ENCODE measurements at regions of chr14 and their contacts with region 1.

Region 1: DNA sequence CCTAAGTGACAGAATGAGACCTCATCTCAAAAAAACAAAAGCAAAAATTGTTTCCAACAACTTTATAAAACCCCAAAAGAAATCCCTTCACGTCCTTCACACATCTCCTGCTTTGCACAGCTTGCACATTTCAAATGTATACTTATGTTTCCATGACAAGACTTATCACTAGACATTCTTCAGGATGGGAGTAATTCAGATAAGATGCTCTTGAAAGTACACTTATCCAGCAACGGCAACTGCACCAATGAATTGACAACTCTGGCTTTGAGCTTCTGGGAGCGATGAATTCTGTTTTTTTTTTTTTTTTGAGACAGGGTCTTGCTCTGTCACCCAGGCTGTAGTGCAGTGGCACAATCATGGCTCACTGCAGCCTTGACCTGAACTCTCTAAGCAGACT is 30.8 kb upstream of the AKAP5 start:
- DNase-seq: no peak
- H3K4me3 ChIP-seq: no peak overlapping the region
- H3K27ac ChIP-seq: no peak overlapping the region
- H3K4me1 ChIP-seq: peaks cover 16% of the 10 kb centered on the region
- H3K27me3 ChIP-seq: no peaks in the 10 kb centered on the region
- CTCF ChIP-seq: no peak
- POLR2A ChIP-seq: no peak

Region 2: GRCh38 chr14:64186231-64187129 is 248.0 kb before region 1 on chr14:
- CTCF ChIA-PET with region 1: no interaction called
- POLR2A ChIA-PET with region 1: no interaction called
- dilution Hi-C with region 1: no loop called
- intact Hi-C with region 1: no loop called
- DNase-seq: no peak
- H3K4me3 ChIP-seq: no peak overlapping the region
- H3K27ac ChIP-seq: no peak overlapping the region
- H3K4me1 ChIP-seq: no peaks in the 10 kb centered on the region
- H3K27me3 ChIP-seq: no peaks in the 10 kb centered on the region
- CTCF ChIP-seq: no peak
- POLR2A ChIP-seq: no peak

Region 3: DNA sequence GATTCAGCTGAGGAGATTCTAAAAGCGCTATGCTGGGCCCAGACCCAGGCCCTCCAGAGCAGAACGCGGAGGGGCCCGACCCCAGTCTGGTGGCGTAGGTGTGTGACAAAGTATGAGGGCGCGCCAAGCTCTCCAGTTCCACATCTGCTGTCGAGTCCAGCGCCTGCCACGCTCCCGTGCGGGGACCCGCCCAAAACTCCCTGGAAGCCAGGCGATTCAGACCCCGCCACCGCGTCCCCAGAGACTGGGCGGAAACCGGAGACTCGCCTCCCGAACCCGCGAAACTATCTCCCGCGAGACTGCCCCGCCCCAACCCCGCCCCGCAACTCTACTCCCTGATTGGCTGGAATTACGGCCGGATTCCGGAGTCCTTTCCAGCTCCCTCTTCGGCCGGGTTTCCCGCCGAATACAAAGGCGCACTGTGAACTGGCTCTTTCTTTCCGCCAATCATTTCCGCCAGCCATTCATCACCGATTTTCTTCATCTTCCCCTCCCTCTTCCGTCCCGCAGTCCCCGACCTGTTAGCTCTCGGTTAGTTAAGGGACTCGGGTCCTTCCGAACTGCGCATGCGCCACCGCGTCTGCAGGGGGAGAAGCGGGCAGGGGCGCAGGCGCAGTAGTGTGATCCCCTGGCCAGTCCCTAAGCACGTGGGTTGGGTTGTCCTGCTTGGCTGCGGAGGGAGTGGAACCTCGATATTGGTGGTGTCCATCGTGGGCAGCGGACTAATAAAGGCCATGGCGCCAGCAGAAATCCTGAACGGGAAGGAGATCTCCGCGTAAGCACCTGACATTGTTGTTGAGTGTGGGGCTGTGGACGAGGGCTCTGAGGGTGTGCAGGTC is 46.6 kb before region 1 on chr14 and contains the start of gene MTHFD1:
- CTCF ChIA-PET with region 1: interaction called, 14 read pairs
- POLR2A ChIA-PET with region 1: no interaction called
- dilution Hi-C with region 1: no loop called
- intact Hi-C with region 1: loop called (anchors 2 kb)
- DNase-seq: peak; percentile 99
- H3K4me3 ChIP-seq: peak within 1 kb of the TSS; percentile 56 to 94 (median 88)
- H3K27ac ChIP-seq: peak within 1 kb of the TSS; percentile 68
- H3K4me1 ChIP-seq: peaks cover 16% of the 10 kb centered on the region
- H3K27me3 ChIP-seq: no peaks in the 10 kb centered on the region
- CTCF ChIP-seq: no peak
- POLR2A ChIP-seq: peak; percentile 48
- total RNA-seq, gene MTHFD1: 104 and 114 TPM in 2 replicates

Region 4: DNA sequence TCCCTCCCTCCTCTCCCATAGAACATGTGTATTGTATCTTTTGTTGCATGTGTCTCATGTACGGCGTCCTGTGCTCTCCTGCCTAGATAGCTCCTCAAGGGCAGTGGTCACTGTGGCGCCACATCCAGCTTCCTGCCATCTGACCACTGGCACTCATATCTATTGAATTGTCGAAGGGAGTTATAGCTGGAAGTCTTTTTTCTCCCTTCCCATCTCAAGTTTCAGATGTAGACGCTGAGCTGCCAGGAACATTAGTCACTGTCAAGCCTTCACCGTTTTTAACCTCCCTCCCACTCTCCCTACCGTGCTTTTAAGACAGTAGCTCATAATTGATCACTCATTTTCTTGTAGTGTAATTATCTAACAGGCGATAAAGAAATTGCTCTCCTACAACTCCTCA is 13.4 kb before region 1 on chr14:
- CTCF ChIA-PET with region 1: interaction called, 31 read pairs
- POLR2A ChIA-PET with region 1: no interaction called
- dilution Hi-C with region 1: no loop called
- intact Hi-C with region 1: no loop called
- DNase-seq: no peak
- H3K4me3 ChIP-seq: no peak overlapping the region
- H3K27ac ChIP-seq: no peak overlapping the region
- H3K4me1 ChIP-seq: no peaks in the 10 kb centered on the region
- H3K27me3 ChIP-seq: no peaks in the 10 kb centered on the region
- CTCF ChIP-seq: no peak
- POLR2A ChIP-seq: no peak

Region 5: GRCh38 chr14:64450255-64450654 is 15.7 kb after region 1 on chr14:
- CTCF ChIA-PET with region 1: interaction called, 19 read pairs
- POLR2A ChIA-PET with region 1: no interaction called
- dilution Hi-C with region 1: no loop called
- intact Hi-C with region 1: no loop called
- DNase-seq: no peak
- H3K4me3 ChIP-seq: no peak overlapping the region
- H3K27ac ChIP-seq: no peak overlapping the region
- H3K4me1 ChIP-seq: peaks cover 7% of the 10 kb centered on the region
- H3K27me3 ChIP-seq: no peaks in the 10 kb centered on the region
- CTCF ChIP-seq: no peak
- POLR2A ChIP-seq: no peak

Region 6: GRCh38 chr14:64510825-64511671 is 76.5 kb after region 1 on chr14:
- CTCF ChIA-PET with region 1: interaction called, 15 read pairs
- POLR2A ChIA-PET with region 1: no interaction called
- dilution Hi-C with region 1: no loop called
- intact Hi-C with region 1: no loop called
- DNase-seq: peak; percentile 72
- H3K4me3 ChIP-seq: no peak overlapping the region
- H3K27ac ChIP-seq: no peak overlapping the region
- H3K4me1 ChIP-seq: peaks cover 21% of the 10 kb centered on the region
- H3K27me3 ChIP-seq: no peaks in the 10 kb centered on the region
- CTCF ChIP-seq: peak; percentile 78 to 84
- POLR2A ChIP-seq: no peak

Region 7: DNA sequence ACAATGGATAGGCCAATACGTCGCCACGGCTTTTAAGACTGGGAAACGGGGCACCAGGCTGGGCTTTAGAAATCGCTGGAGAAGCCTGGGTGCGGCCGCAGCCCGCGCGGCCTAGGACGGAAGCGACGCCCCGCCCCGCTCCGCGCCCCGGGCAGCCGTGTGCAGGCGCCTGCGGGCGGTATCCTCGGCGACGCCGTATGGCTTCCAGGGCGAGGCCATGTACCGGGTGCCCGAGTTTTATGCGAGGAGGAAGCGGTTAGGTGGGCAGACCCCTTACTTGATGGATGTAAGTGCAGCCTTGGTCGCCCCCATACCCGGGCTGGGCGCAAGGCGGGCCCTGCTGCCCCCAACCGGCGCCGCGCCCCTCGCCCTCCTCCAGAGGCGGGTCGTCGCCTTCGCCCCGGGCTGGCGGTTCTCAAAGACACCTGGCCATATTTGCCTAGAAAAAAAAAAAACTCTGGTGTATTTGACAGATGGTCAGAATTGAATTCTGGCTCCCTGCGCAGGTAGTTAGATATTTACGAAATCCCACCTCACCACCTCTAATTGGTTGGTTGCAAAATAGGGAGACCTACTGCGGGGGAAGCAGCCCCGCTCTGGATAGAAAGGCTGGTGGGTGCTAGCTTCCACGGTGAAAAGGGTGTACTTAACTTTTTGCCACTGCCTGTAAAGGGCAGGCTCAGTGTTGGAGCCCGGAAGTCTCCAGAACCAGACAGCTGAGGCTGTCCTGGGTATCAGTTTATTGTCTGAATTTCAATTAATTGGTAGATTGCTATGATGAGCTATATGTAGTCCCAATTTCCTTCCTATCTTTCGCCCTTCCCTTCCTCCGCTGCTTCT is 115.5 kb after region 1 on chr14 and contains the start of gene PPP1R36:
- CTCF ChIA-PET with region 1: no interaction called
- POLR2A ChIA-PET with region 1: no interaction called
- dilution Hi-C with region 1: no loop called
- intact Hi-C with region 1: no loop called
- DNase-seq: no peak
- H3K4me3 ChIP-seq: peak within 1 kb of the TSS; percentile 16 to 30 (median 21)
- H3K27ac ChIP-seq: no peak within 1 kb of the TSS
- H3K4me1 ChIP-seq: peaks cover 11% of the 10 kb centered on the region
- H3K27me3 ChIP-seq: peaks cover 20% of the 10 kb centered on the region in 2 experiments
- CTCF ChIP-seq: no peak
- POLR2A ChIP-seq: no peak
- total RNA-seq, gene PPP1R36: 0.51 and 0.60 TPM in 2 replicates